ENCODE measurements at regions of chr10 and their contacts with region 1.

Region 1: GRCh38 chr10:102394079-102394800 is 1.3 kb upstream of the NFKB2 start:
- DNase-seq: peak; percentile 97
- ATAC-seq: peak; percentile 90
- H3K4me3 Mint-ChIP-seq: peak overlapping the region; percentile 90
- H3K27ac Mint-ChIP-seq: peak overlapping the region; percentile 96
- H3K4me1 Mint-ChIP-seq: peaks cover 20% of the 10 kb centered on the region
- H3K27me3 Mint-ChIP-seq: peaks cover 3% of the 10 kb centered on the region

Region 2: GRCh38 chr10:102195296-102195870 is 198.9 kb before region 1 on chr10:
- POLR2A ChIA-PET with region 1: no interaction called
- DNase-seq: no peak
- ATAC-seq: no peak
- H3K4me3 Mint-ChIP-seq: no peak overlapping the region
- H3K27ac Mint-ChIP-seq: no peak overlapping the region
- H3K4me1 Mint-ChIP-seq: no peaks in the 10 kb centered on the region
- H3K27me3 Mint-ChIP-seq: no peaks in the 10 kb centered on the region

Region 3: DNA sequence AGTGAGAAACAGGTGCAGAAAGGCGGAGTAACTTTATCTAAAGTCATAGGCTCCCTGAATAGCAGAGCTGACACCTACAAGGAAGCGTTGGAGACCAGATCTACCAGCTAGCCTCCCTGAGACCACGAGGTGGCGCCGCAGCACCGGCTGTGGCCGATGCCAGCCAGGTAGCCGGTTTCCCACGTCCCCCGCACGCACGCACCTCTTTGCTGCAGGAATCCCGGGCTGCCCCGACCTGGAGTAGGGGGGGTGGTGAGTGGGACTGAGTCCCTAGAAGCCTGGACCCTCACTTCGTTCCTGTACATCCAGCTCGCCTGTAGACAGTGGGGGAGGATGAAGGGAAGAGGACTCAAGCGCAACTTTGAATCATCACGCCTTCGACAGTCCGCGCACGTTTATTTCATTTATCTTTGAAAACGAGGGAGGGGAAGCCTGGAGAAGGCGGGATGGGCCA is 164.4 kb before region 1 on chr10:
- POLR2A ChIA-PET with region 1: interaction called, 19 read pairs
- DNase-seq: peak; percentile 93
- ATAC-seq: peak; percentile 44
- H3K4me3 Mint-ChIP-seq: peak overlapping the region; percentile 80
- H3K27ac Mint-ChIP-seq: no peak overlapping the region
- H3K4me1 Mint-ChIP-seq: peaks cover 18% of the 10 kb centered on the region
- H3K27me3 Mint-ChIP-seq: peaks cover 50% of the 10 kb centered on the region

Region 4: GRCh38 chr10:102420810-102421644 is 26.8 kb after region 1 on chr10 and contains the start of gene FBXL15:
- POLR2A ChIA-PET with region 1: interaction called, 39 read pairs
- DNase-seq: peak; percentile 95
- ATAC-seq: peak; percentile 75
- H3K4me3 Mint-ChIP-seq: peak within 1 kb of the TSS; percentile 93
- H3K27ac Mint-ChIP-seq: peak within 1 kb of the TSS; percentile 91
- H3K4me1 Mint-ChIP-seq: peaks cover 26% of the 10 kb centered on the region
- H3K27me3 Mint-ChIP-seq: peaks cover 22% of the 10 kb centered on the region
- total RNA-seq, gene FBXL15: 11.7 to 16.3 TPM

Region 5: DNA sequence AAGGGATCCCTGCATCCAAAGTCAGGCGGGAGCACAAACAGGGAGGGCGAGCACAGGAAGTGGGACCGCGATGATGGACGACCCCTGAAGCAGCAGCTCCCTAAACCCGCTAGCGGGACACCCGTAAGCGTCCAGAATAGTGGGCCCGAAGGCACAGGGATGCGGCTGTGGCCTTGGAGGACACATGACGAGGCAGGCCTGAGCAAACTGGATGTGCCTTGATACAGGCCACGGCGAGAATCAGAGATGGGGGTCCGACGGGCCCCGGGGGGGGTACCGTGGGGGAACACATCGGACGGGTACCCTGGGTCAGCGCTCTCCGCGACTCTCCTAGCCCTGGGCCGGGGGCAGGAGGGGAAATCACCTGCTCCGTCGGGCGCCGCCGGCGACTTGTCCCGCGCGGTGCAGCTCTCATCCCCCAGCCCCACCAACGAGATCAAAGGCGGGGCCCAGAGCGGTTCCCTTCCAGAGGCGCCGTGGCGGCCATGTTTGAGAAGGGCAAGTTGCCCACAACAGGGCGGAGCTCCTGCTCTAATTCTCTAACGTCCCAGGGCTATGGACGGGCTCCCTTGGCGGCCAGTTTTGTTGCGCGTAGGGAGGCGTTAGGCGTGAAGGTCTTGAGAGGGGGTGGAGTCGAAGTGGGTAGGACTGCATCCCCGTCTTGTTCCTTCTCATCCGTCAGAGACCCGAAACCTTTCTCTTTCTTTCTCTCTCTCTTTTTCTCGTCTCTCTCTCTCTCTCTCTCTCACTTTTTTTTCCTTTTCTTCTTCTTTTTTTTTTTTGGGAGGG is 38.1 kb after region 1 on chr10 and contains the start of gene CUEDC2:
- POLR2A ChIA-PET with region 1: interaction called, 30 read pairs
- DNase-seq: peak; percentile 98
- ATAC-seq: peak; percentile 92
- H3K4me3 Mint-ChIP-seq: peak within 1 kb of the TSS; percentile 87
- H3K27ac Mint-ChIP-seq: peak within 1 kb of the TSS; percentile 94
- H3K4me1 Mint-ChIP-seq: peaks cover 36% of the 10 kb centered on the region
- H3K27me3 Mint-ChIP-seq: no peaks in the 10 kb centered on the region
- total RNA-seq, gene CUEDC2: 68.6 to 70.3 TPM

Region 6: GRCh38 chr10:102461187-102462054 is 67.2 kb after region 1 on chr10:
- POLR2A ChIA-PET with region 1: interaction called, 11 read pairs
- DNase-seq: peak; percentile 94
- ATAC-seq: peak; percentile 98
- H3K4me3 Mint-ChIP-seq: peak overlapping the region; percentile 96
- H3K27ac Mint-ChIP-seq: peak overlapping the region; percentile 84
- H3K4me1 Mint-ChIP-seq: peaks cover 25% of the 10 kb centered on the region
- H3K27me3 Mint-ChIP-seq: no peaks in the 10 kb centered on the region

Region 7: GRCh38 chr10:102565793-102566192 is 171.6 kb after region 1 on chr10:
- POLR2A ChIA-PET with region 1: no interaction called
- DNase-seq: no peak
- ATAC-seq: no peak
- H3K4me3 Mint-ChIP-seq: no peak overlapping the region
- H3K27ac Mint-ChIP-seq: no peak overlapping the region
- H3K4me1 Mint-ChIP-seq: peaks cover 2% of the 10 kb centered on the region
- H3K27me3 Mint-ChIP-seq: no peaks in the 10 kb centered on the region